ENCODE measurements at regions of chr10 and their contacts with region 1.

Region 1: GRCh38 chr10:122475100-122475499 is 13.7 kb downstream of the HTRA1 start:
- DNase-seq: peak; percentile 69
- H3K4me3 ChIP-seq: peak overlapping the region in 1 of 3 experiments; percentile 15
- H3K27ac ChIP-seq: peak overlapping the region; percentile 97
- H3K4me1 ChIP-seq: peaks cover 38% of the 10 kb centered on the region
- H3K27me3 ChIP-seq: no peaks in the 10 kb centered on the region
- CTCF ChIP-seq: no peak
- POLR2A ChIP-seq: no peak

Region 2: DNA sequence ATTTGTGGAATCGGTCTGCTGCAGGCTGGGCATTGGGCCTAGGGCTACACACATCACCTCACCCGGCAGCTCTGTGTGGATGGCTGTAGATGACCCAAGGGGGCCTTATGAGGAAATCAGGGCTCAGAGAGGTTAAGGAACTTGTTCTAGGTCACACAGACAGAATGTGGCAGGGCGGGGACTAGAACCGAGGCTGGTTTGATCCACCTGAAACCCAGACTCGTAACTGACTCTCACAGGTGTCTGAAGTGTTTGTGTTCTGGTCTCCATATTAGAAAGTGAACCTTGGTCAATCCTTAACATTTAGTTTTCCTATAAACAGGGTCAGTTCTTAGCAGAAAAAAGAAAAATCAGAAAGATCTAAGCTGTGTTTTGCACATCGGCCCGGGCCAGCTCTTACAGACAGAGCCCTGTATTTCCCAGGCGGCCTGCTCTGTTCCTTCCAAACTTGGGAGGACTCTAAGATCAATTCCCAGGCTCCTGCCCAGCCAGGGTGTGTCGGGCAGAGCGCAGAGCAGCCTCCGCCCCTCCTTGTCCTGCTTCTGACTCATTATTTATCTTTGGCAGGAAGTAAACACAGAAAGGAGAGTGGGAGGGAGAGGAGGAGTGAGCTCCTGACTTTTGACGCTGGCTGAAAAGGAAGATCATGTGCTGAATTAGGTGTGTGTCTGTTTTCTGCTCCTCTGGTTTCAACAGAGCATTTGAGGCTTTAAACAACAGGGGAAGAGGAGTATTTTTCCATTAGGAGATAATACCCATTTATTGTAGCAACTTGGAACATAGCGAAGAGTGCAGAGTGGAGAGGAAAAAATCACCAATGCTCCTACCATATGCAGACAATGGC is 412.0 kb before region 1 on chr10:
- CTCF ChIA-PET with region 1: no interaction called
- POLR2A ChIA-PET with region 1: no interaction called
- dilution Hi-C with region 1: no loop called
- intact Hi-C with region 1: no loop called
- DNase-seq: peak; percentile 90
- H3K4me3 ChIP-seq: no peak overlapping the region
- H3K27ac ChIP-seq: peak overlapping the region; percentile 14
- H3K4me1 ChIP-seq: peaks cover 8% of the 10 kb centered on the region
- H3K27me3 ChIP-seq: no peaks in the 10 kb centered on the region
- CTCF ChIP-seq: no peak
- POLR2A ChIP-seq: no peak

Region 3: GRCh38 chr10:122307669-122308486 is 167.2 kb before region 1 on chr10:
- CTCF ChIA-PET with region 1: interaction called, 3 read pairs
- POLR2A ChIA-PET with region 1: interaction called, 3 read pairs
- dilution Hi-C with region 1: no loop called
- intact Hi-C with region 1: loop called (anchors 1 kb)
- DNase-seq: peak; percentile 99
- H3K4me3 ChIP-seq: peak overlapping the region in 1 of 3 experiments; percentile 55
- H3K27ac ChIP-seq: peak overlapping the region; percentile 93
- H3K4me1 ChIP-seq: peaks cover 44% of the 10 kb centered on the region
- H3K27me3 ChIP-seq: no peaks in the 10 kb centered on the region
- CTCF ChIP-seq: no peak
- POLR2A ChIP-seq: no peak

Region 4: GRCh38 chr10:122461367-122461728 is 13.8 kb before region 1 on chr10 and contains the start of gene HTRA1:
- CTCF ChIA-PET with region 1: interaction called, 3 read pairs
- POLR2A ChIA-PET with region 1: no interaction called
- dilution Hi-C with region 1: no loop called
- intact Hi-C with region 1: loop called (anchors 1 kb)
- DNase-seq: peak; percentile 67
- H3K4me3 ChIP-seq: peak within 1 kb of the TSS; percentile 71 to 92 (median 88)
- H3K27ac ChIP-seq: peak within 1 kb of the TSS; percentile 46
- H3K4me1 ChIP-seq: peaks cover 14% of the 10 kb centered on the region
- H3K27me3 ChIP-seq: no peaks in the 10 kb centered on the region
- CTCF ChIP-seq: no peak
- POLR2A ChIP-seq: peak; percentile 58
- total RNA-seq, gene HTRA1: 192 and 255 TPM in 2 replicates

Region 5: GRCh38 chr10:122495406-122496340 is 20.6 kb after region 1 on chr10:
- CTCF ChIA-PET with region 1: interaction called, 14 read pairs
- POLR2A ChIA-PET with region 1: interaction called, 15 read pairs
- dilution Hi-C with region 1: no loop called
- intact Hi-C with region 1: loop called (anchors 1 kb)
- DNase-seq: peak; percentile 72
- H3K4me3 ChIP-seq: peak overlapping the region in 1 of 3 experiments; percentile 32
- H3K27ac ChIP-seq: peak overlapping the region; percentile 91
- H3K4me1 ChIP-seq: peaks cover 32% of the 10 kb centered on the region
- H3K27me3 ChIP-seq: no peaks in the 10 kb centered on the region
- CTCF ChIP-seq: no peak
- POLR2A ChIP-seq: no peak

Region 6: GRCh38 chr10:122525788-122526187 is 50.7 kb after region 1 on chr10:
- CTCF ChIA-PET with region 1: interaction called, 3 read pairs
- POLR2A ChIA-PET with region 1: no interaction called
- dilution Hi-C with region 1: no loop called
- intact Hi-C with region 1: loop called (anchors 1 kb)
- DNase-seq: peak; percentile 42
- H3K4me3 ChIP-seq: no peak overlapping the region
- H3K27ac ChIP-seq: no peak overlapping the region
- H3K4me1 ChIP-seq: peaks cover 18% of the 10 kb centered on the region
- H3K27me3 ChIP-seq: no peaks in the 10 kb centered on the region
- CTCF ChIP-seq: peak; percentile 20 to 31
- POLR2A ChIP-seq: no peak